Posterior cingulate gyrus (tissue), 11 donors: ENCODE measurements at regions of chr19 and their contacts with region 1.

Region 1: GRCh38 chr19:44951179-44952159 is 3.7 kb upstream of the CLPTM1 start:
- DNase-seq: peak; percentile 39 to 90 (median 56)

Region 2: DNA sequence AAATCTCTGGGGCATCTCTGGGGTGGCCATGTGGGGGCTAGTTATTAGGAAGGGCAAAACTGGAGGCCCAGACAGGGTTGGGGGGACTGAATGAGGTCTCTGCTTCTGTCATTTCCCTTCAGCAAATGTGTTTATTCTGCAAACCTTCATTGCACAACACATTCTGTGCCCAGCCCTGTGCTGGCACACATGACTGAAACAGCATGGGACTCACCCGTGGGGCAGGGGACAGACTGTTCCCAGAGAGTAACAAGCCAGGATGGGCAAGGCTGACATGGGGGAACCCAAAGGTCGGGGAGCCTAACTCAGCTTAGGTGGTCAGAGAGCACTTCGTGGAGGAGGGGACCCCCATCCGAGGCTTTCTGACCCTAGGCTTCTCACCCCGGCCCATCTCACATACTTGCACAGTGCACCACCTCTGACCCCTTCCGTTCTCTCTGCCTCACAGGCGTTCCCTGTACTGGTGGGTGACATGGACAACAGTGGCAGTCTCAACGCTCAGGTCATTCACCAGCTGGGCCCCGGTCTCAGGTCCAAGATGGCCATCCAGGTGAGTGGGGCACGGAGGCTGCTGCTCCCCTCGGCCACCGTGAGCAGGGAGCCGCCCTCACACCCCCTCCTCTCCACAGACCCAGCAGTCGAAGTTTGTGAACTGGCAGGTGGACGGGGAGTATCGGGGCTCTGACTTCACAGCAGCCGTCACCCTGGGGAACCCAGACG is 58.0 kb before region 1 on chr19:
- intact Hi-C with region 1: no loop called
- DNase-seq: no peak

Region 3: DNA sequence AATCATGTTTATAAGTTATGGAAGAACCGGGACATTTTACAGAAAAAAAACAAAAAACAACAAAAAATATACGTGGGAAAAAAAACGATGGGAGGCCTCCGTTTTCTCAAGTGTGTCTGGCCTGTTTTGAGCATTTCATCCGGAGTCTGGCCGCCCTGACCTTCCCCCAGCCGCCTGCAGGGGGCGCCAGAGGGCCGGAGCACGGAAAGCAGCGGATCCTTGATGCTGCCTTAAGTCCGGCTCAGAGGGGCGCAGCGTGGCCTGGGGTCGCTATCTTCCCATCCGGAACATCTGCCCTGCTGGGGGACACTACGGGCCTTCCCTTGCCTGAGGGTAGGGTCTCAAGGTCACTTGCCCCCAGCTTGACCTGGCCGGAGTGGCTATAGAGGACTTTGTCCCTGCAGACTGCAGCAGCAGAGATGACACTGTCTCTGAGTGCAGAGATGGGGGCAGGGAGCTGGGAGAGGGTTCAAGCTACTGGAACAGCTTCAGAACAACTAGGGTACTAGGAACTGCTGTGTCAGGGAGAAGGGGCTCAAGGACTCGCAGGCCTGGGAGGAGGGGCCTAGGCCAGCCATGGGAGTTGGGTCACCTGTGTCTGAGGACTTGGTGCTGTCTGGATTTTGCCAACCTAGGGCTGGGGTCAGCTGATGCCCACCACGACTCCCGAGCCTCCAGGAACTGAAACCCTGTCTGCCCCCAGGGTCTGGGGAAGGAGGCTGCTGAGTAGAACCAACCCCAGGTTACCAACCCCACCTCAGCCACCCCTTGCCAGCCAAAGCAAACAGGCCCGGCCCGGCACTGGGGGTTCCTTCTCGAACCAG is 47.7 kb before region 1 on chr19:
- intact Hi-C with region 1: loop called (anchors 2 kb)
- DNase-seq: peak; percentile 61 to 96 (median 82)

Region 4: DNA sequence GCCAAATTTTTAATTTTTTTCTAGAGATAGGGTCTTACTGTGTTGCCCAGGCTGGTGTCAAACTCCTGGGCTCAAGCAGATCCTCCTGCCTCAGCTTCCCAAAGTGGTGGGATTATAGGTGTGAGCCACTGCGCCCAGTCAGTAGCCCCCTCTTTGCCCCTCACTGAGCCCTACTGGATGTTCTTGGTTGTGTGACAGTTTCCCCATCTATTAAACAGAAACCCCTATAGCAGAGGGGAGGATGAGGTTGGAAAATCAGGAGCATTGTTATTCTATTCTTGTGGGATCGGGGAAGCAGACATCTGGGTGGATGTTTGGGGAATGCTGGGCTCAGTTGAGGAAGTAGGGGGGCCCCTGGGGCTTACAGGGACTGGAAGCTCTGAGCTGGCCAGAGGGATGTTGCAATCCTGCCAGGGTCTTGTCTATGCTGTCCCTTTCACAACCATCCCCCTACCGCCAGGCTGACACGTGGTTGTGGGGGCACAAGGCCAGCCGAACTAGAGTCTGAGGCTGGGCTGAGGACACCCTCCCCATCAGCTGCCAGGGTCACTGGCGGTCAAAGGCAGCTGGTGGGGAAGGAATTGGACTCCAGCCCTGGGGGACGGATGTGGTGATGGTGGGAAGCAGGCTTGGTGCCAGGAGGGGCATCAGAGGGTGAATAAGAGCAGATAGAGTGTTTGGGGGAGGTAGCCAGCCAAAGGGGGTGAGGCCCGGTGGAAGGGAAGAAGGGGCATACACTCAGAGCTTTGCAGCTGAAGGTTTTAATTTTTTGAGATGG is 26.2 kb before region 1 on chr19:
- intact Hi-C with region 1: no loop called
- DNase-seq: peak; percentile 62 to 96 (median 79)

Region 5: GRCh38 chr19:44939668-44940067 is 11.8 kb before region 1 on chr19:
- intact Hi-C with region 1: no loop called
- DNase-seq: no peak

Region 6: DNA sequence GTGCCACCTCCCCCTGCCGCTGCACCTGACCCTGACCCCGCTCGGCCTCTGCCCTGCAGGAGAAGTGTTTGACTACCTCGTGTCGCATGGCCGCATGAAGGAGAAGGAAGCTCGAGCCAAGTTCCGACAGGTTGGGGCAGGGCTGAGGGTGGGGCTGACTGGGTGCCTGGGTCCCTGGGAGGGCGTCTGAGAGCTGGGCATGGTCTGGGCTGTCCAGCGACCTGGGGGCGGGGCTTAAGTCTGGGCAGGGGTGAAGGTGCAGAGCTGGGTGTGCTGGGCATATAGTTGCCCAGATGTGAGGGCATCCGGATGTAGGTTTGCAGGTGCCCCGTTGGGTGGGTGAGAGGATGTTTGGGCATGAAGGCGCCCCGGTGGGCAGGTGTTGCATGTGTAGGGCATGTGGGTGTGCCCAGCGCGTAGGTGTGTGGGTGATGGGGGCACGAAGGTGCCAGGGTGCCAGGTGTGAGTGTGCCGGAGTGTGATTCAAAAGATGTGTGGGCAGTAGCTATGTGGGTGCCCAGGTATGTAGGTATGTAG is 313.4 kb after region 1 on chr19:
- intact Hi-C with region 1: no loop called
- DNase-seq: no peak